ENCODE measurements at regions of chr12 and their contacts with region 1.

Region 1: GRCh38 chr12:117025481-117026151 is 73.6 kb downstream of the TESC start:
- DNase-seq: peak; percentile 59 to 67
- ATAC-seq: peak; percentile 83 to 92 (median 86)
- H3K4me3 ChIP-seq: no peak overlapping the region
- H3K27ac ChIP-seq: peak overlapping the region; percentile 16
- H3K4me1 ChIP-seq: peaks cover 5% of the 10 kb centered on the region
- H3K27me3 ChIP-seq: no peaks in the 10 kb centered on the region
- CTCF ChIP-seq: peak; percentile 86

Region 2: DNA sequence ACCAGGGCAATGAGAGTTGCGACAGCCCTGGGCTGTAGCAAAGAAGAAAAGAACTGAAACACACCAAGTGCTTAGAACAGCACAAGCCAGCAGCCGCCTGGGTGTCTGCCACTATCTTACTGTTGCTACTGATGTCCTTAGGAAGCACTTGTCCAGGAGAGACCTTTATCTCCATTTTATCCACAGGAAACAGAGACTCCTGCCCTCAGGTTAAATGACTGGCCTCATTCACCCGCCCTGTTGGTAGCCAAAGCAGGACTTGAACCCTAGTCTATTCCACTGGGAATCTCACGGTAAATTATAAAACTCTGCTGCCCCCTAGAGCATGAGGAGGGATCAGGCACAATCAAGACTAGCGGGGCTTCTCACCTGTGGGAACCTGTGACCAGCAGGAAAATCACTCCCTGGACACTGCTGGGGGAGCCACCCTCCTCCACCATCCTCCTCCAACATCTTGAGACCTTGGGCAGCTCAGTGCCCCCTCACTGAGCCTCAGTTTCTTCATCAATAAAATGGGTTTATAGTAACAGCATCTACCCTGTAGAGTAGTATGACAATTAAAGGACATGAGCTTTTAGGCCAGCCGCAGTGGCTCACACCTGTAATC is 94.1 kb after region 1 on chr12:
- intact Hi-C with region 1: loop called (anchors 5 kb)
- DNase-seq: peak; percentile 37 to 71
- ATAC-seq: peak in 2 of 4 donors; percentile 41 to 61
- H3K4me3 ChIP-seq: no peak overlapping the region
- H3K27ac ChIP-seq: no peak overlapping the region
- H3K4me1 ChIP-seq: no peaks in the 10 kb centered on the region
- H3K27me3 ChIP-seq: no peaks in the 10 kb centered on the region
- CTCF ChIP-seq: peak; percentile 50

Region 3: GRCh38 chr12:117151195-117152031 is 125.8 kb after region 1 on chr12:
- intact Hi-C with region 1: loop called in 1 of 2 experiments (anchors 5 kb)
- DNase-seq: peak; percentile 75 to 79
- ATAC-seq: peak; percentile 49 to 72 (median 66)
- H3K4me3 ChIP-seq: no peak overlapping the region
- H3K27ac ChIP-seq: no peak overlapping the region
- H3K4me1 ChIP-seq: no peaks in the 10 kb centered on the region
- H3K27me3 ChIP-seq: no peaks in the 10 kb centered on the region
- CTCF ChIP-seq: peak; percentile 57